Activated CD8-positive, alpha-beta memory T cell treated with anti-CD3 and anti-CD28 coated beads, Interleukin-2, amount 10 ng/mL, durations not matched to agents 7 days and 5 days (primary cell): ENCODE measurements at regions of chr15 and their contacts with region 1.

Region 1: GRCh38 chr15:70097337-70098169 is at the start of gene TLE3:
- DNase-seq: peak; percentile 98
- ATAC-seq: peak; percentile 74
- H3K4me3 Mint-ChIP-seq: peak within 1 kb of the TSS; percentile 95
- H3K27ac Mint-ChIP-seq: peak within 1 kb of the TSS; percentile 97
- H3K4me1 Mint-ChIP-seq: peaks cover 56% of the 10 kb centered on the region
- H3K27me3 Mint-ChIP-seq: peaks cover 22% of the 10 kb centered on the region
- total RNA-seq, gene TLE3: 48.8 to 53.5 TPM

Region 2: GRCh38 chr15:69628371-69629093 is 469.0 kb before region 1 on chr15:
- CTCF ChIA-PET with region 1: no interaction called
- DNase-seq: no peak
- ATAC-seq: no peak
- H3K4me3 Mint-ChIP-seq: no peak overlapping the region
- H3K27ac Mint-ChIP-seq: no peak overlapping the region
- H3K4me1 Mint-ChIP-seq: peaks cover 2% of the 10 kb centered on the region
- H3K27me3 Mint-ChIP-seq: peaks cover 39% of the 10 kb centered on the region

Region 3: GRCh38 chr15:69723404-69724096 is 374.0 kb before region 1 on chr15:
- CTCF ChIA-PET with region 1: interaction called, 10 read pairs
- DNase-seq: no peak
- ATAC-seq: no peak
- H3K4me3 Mint-ChIP-seq: no peak overlapping the region
- H3K27ac Mint-ChIP-seq: no peak overlapping the region
- H3K4me1 Mint-ChIP-seq: peaks cover 56% of the 10 kb centered on the region
- H3K27me3 Mint-ChIP-seq: peaks cover 57% of the 10 kb centered on the region

Region 4: DNA sequence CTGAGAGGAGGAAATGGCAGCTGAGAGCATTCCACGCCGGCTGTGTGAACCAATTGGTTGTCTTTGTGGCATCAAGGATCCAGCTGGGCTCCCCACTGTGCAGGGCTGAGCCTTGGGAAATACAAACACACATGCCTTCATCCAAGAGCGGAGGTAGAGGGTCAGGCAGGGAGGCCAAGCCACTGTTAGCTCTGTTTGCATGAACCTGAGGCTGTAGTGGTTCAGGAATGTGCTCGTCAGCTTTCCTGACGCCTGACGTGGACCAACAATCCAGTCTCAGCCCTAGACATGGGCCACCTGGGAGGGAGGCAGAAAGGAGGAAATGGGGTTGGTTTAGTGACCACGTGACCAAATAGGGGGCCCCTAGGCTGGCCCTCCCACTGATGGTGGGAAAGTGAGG is 276.7 kb before region 1 on chr15:
- CTCF ChIA-PET with region 1: no interaction called
- DNase-seq: no peak
- ATAC-seq: no peak
- H3K4me3 Mint-ChIP-seq: no peak overlapping the region
- H3K27ac Mint-ChIP-seq: no peak overlapping the region
- H3K4me1 Mint-ChIP-seq: no peaks in the 10 kb centered on the region
- H3K27me3 Mint-ChIP-seq: peaks cover 21% of the 10 kb centered on the region

Region 5: GRCh38 chr15:70083946-70084345 is 13.6 kb before region 1 on chr15:
- CTCF ChIA-PET with region 1: interaction called, 11 read pairs
- DNase-seq: peak; percentile 70
- ATAC-seq: peak; percentile 89
- H3K4me3 Mint-ChIP-seq: peak overlapping the region; percentile 19
- H3K27ac Mint-ChIP-seq: peak overlapping the region; percentile 11
- H3K4me1 Mint-ChIP-seq: peaks cover 52% of the 10 kb centered on the region
- H3K27me3 Mint-ChIP-seq: no peaks in the 10 kb centered on the region